MCF 10A (cell line): ENCODE measurements at regions of chr6 and their contacts with region 1.

Region 1: GRCh38 chr6:53171605-53172446 is 23.2 kb upstream of the GCM1 start:
- DNase-seq: peak; percentile 80
- H3K4me3 Mint-ChIP-seq: no peak overlapping the region
- H3K27ac Mint-ChIP-seq: no peak overlapping the region
- H3K4me1 Mint-ChIP-seq: peaks cover 17% of the 10 kb centered on the region
- H3K27me3 Mint-ChIP-seq: no peaks in the 10 kb centered on the region
- CTCF ChIP-seq: peak; percentile 100

Region 2: GRCh38 chr6:53103992-53104675 is 67.7 kb before region 1 on chr6:
- CTCF ChIA-PET with region 1: interaction called, 4 read pairs
- POLR2A ChIA-PET with region 1: no interaction called
- intact Hi-C with region 1: loop called (anchors 5 kb)
- DNase-seq: peak; percentile 40
- H3K4me3 Mint-ChIP-seq: no peak overlapping the region
- H3K27ac Mint-ChIP-seq: no peak overlapping the region
- H3K4me1 Mint-ChIP-seq: peaks cover 6% of the 10 kb centered on the region
- H3K27me3 Mint-ChIP-seq: no peaks in the 10 kb centered on the region
- CTCF ChIP-seq: no peak

Region 3: GRCh38 chr6:53348371-53349208 is 176.8 kb after region 1 on chr6 and contains the start of gene ELOVL5:
- CTCF ChIA-PET with region 1: interaction called, 7 read pairs
- POLR2A ChIA-PET with region 1: no interaction called
- intact Hi-C with region 1: loop called (anchors 5 kb)
- DNase-seq: peak; percentile 90
- H3K4me3 Mint-ChIP-seq: peak within 1 kb of the TSS; percentile 92
- H3K27ac Mint-ChIP-seq: peak within 1 kb of the TSS; percentile 80
- H3K4me1 Mint-ChIP-seq: peaks cover 34% of the 10 kb centered on the region
- H3K27me3 Mint-ChIP-seq: no peaks in the 10 kb centered on the region
- CTCF ChIP-seq: no peak
- total RNA-seq, gene ELOVL5: 56.6 and 58.3 TPM in 2 replicates

Region 4: GRCh38 chr6:53437557-53438202 is 265.9 kb after region 1 on chr6:
- CTCF ChIA-PET with region 1: interaction called, 15 read pairs
- POLR2A ChIA-PET with region 1: interaction called, 3 read pairs
- intact Hi-C with region 1: loop called (anchors 1 kb)
- DNase-seq: peak; percentile 81
- H3K4me3 Mint-ChIP-seq: no peak overlapping the region
- H3K27ac Mint-ChIP-seq: no peak overlapping the region
- H3K4me1 Mint-ChIP-seq: peaks cover 31% of the 10 kb centered on the region
- H3K27me3 Mint-ChIP-seq: no peaks in the 10 kb centered on the region
- CTCF ChIP-seq: peak; percentile 12

Region 5: GRCh38 chr6:53484476-53485280 is 312.9 kb after region 1 on chr6:
- CTCF ChIA-PET with region 1: interaction called, 243 read pairs
- POLR2A ChIA-PET with region 1: interaction called, 12 read pairs
- intact Hi-C with region 1: loop called (anchors 1 kb)
- DNase-seq: peak; percentile 76
- H3K4me3 Mint-ChIP-seq: no peak overlapping the region
- H3K27ac Mint-ChIP-seq: no peak overlapping the region
- H3K4me1 Mint-ChIP-seq: peaks cover 16% of the 10 kb centered on the region
- H3K27me3 Mint-ChIP-seq: no peaks in the 10 kb centered on the region
- CTCF ChIP-seq: peak; percentile 93